WTC11 (cell line): ENCODE measurements at regions of chr16 and their contacts with region 1.

Region 1: DNA sequence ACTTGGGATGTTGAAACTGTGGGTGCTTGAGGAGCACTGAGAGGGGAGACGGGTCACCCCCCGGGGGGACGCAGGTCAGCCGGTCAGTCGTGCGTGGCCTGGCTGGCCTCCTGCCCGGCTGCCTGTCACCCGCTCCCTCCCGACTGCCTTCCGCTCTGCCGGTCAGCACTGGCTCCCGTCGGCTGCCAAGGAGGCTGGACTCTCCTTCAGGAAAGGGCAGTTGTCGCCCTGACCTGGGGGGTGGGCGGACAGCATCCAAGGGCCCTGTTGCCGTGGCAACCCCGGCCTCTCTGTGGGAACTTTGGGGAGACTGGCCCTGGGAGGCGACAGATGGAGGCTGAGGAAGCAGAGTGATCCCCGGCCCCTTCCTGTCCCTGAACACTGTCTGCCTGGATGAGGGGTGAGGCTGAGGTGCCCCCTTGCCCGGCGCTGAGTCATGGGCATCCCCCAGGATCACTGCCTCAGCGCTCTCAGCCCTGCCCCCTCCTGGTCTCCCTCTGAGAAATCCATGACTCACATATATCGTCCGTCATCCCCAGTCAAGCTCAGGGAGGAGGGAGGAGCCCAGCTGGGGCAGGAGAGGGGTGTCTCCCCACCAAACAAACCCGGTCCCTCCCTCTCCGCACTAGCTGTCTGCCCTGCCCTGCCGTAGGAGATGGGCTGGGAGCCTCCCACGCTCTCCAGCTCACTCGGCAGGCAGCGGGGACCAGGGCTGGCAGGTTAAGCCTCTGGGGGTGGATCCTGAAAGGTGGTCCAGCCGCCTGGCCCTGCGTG is at the start of gene ADGRG1:
- DNase-seq: peak; percentile 54
- ATAC-seq: peak; percentile 64
- H3K4me3 Mint-ChIP-seq: peak within 1 kb of the TSS; percentile 49
- H3K27ac Mint-ChIP-seq: peak within 1 kb of the TSS; percentile 51; the same call in 1 of the 2 replicates
- H3K4me1 Mint-ChIP-seq: peaks cover 31% of the 10 kb centered on the region
- H3K27me3 Mint-ChIP-seq: no peaks in the 10 kb centered on the region; the same call in 1 of the 2 replicates
- CTCF ChIP-seq: no peak
- total RNA-seq, gene ADGRG1: 1.7 to 2.6 TPM (median 2.0 TPM) in 3 replicates

Region 2: GRCh38 chr16:57591086-57591869 is 36.9 kb before region 1 on chr16:
- CTCF ChIA-PET with region 1: interaction called, 10 read pairs
- POLR2A ChIA-PET with region 1: no interaction called
- DNase-seq: peak; percentile 83
- ATAC-seq: peak; percentile 99
- H3K4me3 Mint-ChIP-seq: no peak overlapping the region
- H3K27ac Mint-ChIP-seq: no peak overlapping the region
- H3K4me1 Mint-ChIP-seq: 0 out of 2 replicates have a peak, but pooled peaks cover 3% of the 10 kb centered on the region
- H3K27me3 Mint-ChIP-seq: peaks cover 28% of the 10 kb centered on the region
- CTCF ChIP-seq: peak; percentile 94

Region 3: GRCh38 chr16:57600048-57600835 is 28.0 kb before region 1 on chr16:
- CTCF ChIA-PET with region 1: interaction called, 17 read pairs
- POLR2A ChIA-PET with region 1: no interaction called
- DNase-seq: peak; percentile 84
- ATAC-seq: peak; percentile 99
- H3K4me3 Mint-ChIP-seq: no peak overlapping the region
- H3K27ac Mint-ChIP-seq: no peak overlapping the region
- H3K4me1 Mint-ChIP-seq: no peaks in the 10 kb centered on the region
- H3K27me3 Mint-ChIP-seq: peaks cover 7% of the 10 kb centered on the region; the same call in 1 of the 2 replicates
- CTCF ChIP-seq: peak; percentile 77

Region 4: DNA sequence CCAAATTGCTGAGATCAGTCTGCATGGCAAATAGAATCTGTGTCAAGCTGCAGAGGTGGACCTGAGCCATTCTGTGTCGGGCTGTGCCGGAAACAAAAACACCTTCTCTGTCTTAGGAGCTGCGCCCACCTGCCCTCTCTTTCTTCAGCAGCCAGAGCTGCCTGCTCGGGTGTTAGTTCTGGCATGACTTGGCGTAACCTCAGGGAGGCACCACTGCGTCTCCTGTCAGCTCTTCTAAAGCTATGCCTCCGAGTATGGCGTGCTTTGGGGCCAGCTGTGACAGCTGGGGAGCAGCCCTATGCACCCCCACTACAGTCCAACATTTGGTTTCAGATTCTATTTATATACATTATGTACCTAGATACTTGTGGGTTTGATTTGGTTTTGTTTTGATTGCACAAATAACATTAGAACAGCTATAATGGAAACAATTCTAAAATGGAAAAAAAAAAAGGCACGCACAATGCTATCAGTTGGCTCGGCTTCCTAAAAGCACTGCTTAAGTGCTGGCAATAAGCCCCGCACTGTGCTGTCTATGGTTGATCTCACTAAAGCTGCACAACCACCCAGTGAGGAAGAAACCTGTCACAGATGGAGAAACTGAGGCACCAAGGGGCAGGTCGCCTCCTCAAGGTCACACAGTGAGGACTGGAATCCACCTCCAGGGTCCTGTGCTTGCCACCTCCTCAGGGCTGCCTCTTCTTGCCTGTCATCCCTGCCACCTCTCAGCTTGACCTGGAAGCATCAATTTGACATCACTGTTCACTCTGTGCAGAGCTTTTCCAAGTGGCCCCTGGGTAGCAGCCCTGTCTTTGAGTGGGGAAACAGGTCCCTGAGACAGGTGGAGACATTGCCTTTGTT is 18.4 kb before region 1 on chr16:
- CTCF ChIA-PET with region 1: interaction called, 17 read pairs
- POLR2A ChIA-PET with region 1: no interaction called
- DNase-seq: no peak
- ATAC-seq: peak; percentile 22
- H3K4me3 Mint-ChIP-seq: no peak overlapping the region
- H3K27ac Mint-ChIP-seq: no peak overlapping the region
- H3K4me1 Mint-ChIP-seq: no peaks in the 10 kb centered on the region
- H3K27me3 Mint-ChIP-seq: no peaks in the 10 kb centered on the region
- CTCF ChIP-seq: no peak

Region 5: GRCh38 chr16:57639172-57639887 is 11.1 kb after region 1 on chr16:
- CTCF ChIA-PET with region 1: interaction called, 27 read pairs
- POLR2A ChIA-PET with region 1: no interaction called
- DNase-seq: peak; percentile 75
- ATAC-seq: peak; percentile 85
- H3K4me3 Mint-ChIP-seq: no peak overlapping the region
- H3K27ac Mint-ChIP-seq: no peak overlapping the region
- H3K4me1 Mint-ChIP-seq: no peaks in the 10 kb centered on the region
- H3K27me3 Mint-ChIP-seq: peaks cover 7% of the 10 kb centered on the region; the same call in 1 of the 2 replicates
- CTCF ChIP-seq: no peak

Region 6: DNA sequence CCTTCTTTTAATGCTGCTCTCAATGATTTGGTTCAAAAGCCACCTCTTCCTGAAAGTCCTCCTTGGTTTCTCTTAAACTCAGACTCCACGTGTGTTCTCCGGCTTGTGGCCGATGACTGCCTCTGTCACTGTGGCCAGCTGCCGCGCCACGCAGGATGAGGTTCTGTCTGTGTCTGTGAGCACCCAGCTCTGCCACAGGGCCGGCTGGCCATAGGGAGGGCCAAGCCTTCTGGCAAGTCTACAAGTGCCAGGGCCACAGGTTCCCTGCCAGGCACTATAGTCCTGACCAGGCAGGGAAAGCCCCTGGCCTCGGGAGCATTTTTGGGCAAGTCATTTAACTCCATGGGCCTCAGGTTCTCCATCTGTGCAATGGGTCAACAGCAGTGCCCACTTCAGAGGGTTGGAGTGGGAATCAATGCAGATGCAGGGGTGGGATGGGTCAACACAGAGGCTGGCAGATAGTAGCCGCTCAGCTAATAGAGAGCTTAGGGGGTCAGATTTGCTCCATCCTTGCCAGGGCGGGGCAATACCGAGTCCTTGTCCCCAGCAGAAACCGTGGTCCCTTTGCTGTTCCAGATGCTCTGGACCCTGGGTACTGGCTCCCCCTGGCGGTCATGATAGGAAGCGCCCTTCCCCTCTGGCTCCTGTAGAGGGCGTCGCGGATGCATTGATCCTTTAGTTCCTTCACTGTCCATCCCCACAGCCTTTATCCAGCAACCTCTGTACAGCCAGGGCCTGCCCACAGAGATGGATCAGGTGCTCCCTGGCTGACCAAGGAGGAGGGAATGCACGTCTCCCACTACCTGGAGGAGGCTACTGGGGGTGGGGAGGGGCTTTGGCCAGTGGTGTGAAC is 20.6 kb after region 1 on chr16:
- CTCF ChIA-PET with region 1: interaction called, 25 read pairs
- POLR2A ChIA-PET with region 1: no interaction called
- DNase-seq: peak; percentile 87
- ATAC-seq: peak; percentile 90
- H3K4me3 Mint-ChIP-seq: no peak overlapping the region
- H3K27ac Mint-ChIP-seq: 0 out of 2 replicates have a peak overlapping the region, but pooled peaks have one; percentile 53
- H3K4me1 Mint-ChIP-seq: 0 out of 2 replicates have a peak, but pooled peaks cover 2% of the 10 kb centered on the region
- H3K27me3 Mint-ChIP-seq: no peaks in the 10 kb centered on the region; the same call in 1 of the 2 replicates
- CTCF ChIP-seq: peak; percentile 100